Activated CD8-positive, alpha-beta T cell treated with anti-CD3 and anti-CD28 coated beads for 36 hours (primary cell): ENCODE measurements at regions of chrX and their contacts with region 1.

Region 1: DNA sequence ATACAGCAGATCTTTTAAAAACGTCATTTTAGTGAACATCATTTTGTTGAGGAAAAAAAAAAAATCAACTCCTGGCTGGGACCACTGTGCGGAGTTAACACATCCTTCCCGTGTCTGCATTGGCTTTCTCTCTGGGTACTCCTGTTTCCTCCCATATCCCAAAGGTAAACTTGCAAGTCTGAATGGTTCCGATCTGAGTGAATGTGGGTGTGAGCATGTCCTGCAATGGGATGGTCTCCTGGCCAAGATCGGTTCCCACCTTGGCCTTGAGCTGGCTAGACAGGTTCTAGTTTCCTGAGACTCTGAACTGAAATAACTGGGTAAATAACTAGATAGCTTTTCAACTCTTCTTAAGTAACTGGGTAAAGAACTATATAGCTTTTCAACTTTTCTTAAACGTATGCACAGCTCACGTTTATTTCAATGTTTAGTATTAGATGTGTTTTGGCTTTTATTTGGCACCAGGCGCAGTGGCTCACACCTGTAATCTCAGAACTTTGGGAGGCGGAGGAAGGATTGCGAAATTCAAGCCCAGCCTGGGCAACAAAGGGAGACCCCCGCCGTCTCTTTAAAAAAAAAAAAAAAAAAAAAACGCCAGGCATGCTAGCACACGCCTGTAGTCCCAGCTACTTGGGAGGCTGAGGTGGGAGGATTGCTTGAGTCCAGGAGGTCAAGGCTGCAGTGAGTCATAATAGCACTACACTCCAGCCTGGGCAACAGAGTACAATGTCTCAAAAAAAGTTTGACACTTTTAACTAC is 14.0 kb downstream of the RBMX start:
- DNase-seq: no peak
- ATAC-seq: no peak
- H3K4me3 Mint-ChIP-seq: no peak overlapping the region
- H3K27ac Mint-ChIP-seq: peak overlapping the region; percentile 76
- H3K4me1 Mint-ChIP-seq: peaks cover 45% of the 10 kb centered on the region
- H3K27me3 Mint-ChIP-seq: no peaks in the 10 kb centered on the region
- CTCF ChIP-seq: no peak

Region 2: DNA sequence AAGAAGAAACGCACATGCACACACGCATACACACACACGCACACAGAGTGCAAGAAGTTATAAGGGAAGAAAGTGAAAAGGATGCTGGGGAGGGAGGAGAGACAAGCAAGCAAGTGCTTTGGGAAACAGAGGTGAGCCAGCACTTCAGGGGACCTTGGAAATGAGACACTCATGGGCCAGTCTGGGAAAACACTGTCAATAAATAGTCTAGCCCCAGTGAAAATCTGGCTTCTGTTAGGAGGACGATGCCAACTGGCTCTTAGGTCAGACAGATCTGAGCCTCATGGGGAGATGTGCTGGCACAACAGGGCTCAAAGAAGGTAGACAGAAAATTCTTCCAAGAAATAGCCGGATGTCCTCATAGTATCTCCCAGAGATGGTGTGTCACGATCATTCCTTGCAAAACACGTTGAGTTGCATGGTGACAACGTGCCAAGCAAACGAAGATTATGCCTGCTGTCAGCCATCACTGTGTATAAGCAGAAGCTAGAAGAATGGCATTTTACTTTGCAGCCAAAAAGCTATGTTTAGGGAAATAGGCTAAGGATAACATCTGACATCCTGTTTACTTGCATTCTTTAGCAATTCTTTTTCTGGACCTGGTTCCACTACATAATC is 85.2 kb before region 1 on chrX:
- CTCF ChIA-PET with region 1: no interaction called
- POLR2A ChIA-PET with region 1: interaction called, 4 read pairs
- intact Hi-C with region 1: loop called (anchors 10 kb)
- DNase-seq: no peak
- ATAC-seq: no peak
- H3K4me3 Mint-ChIP-seq: peak overlapping the region; percentile 77
- H3K27ac Mint-ChIP-seq: peak overlapping the region; percentile 99
- H3K4me1 Mint-ChIP-seq: peaks cover 48% of the 10 kb centered on the region
- H3K27me3 Mint-ChIP-seq: no peaks in the 10 kb centered on the region
- CTCF ChIP-seq: no peak

Region 3: GRCh38 chrX:136816970-136817369 is 49.5 kb before region 1 on chrX:
- CTCF ChIA-PET with region 1: no interaction called
- POLR2A ChIA-PET with region 1: no interaction called
- intact Hi-C with region 1: no loop called
- DNase-seq: no peak
- ATAC-seq: no peak
- H3K4me3 Mint-ChIP-seq: no peak overlapping the region
- H3K27ac Mint-ChIP-seq: no peak overlapping the region
- H3K4me1 Mint-ChIP-seq: no peaks in the 10 kb centered on the region
- H3K27me3 Mint-ChIP-seq: no peaks in the 10 kb centered on the region
- CTCF ChIP-seq: no peak

Region 4: DNA sequence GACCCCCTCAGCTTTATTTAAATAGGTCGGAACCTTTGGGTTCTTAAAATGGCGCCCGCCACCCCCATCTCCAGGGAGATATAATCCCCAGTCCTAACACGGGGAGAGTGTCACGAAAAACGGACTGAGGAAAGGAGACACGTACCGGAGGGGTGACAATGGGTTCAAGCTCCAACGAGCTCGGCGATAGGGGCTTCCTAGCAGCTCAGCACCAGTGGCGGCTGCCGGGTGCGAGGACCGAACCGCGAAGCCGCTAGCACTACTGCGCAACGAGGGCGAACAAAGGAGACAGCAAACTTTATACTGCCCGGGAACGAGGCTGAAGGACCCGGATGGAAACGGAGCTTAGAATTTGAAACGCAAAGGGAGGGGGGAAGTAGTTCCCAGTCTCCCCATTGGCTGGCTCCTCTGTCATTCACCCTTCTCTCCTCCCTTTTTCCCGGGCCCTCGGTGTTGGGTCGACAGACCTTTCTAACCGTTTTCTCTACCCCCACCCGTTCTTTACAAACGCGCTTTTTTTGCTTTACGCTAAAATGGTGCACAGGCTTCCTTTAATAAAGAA is 14.0 kb after region 1 on chrX and contains the start of gene RBMX:
- CTCF ChIA-PET with region 1: interaction called, 3 read pairs
- POLR2A ChIA-PET with region 1: interaction called, 31 read pairs
- intact Hi-C with region 1: no loop called
- DNase-seq: peak; percentile 94
- ATAC-seq: peak; percentile 91
- H3K4me3 Mint-ChIP-seq: peak within 1 kb of the TSS; percentile 99
- H3K27ac Mint-ChIP-seq: peak within 1 kb of the TSS; percentile 100
- H3K4me1 Mint-ChIP-seq: peaks cover 21% of the 10 kb centered on the region
- H3K27me3 Mint-ChIP-seq: no peaks in the 10 kb centered on the region
- CTCF ChIP-seq: no peak
- total RNA-seq, gene RBMX: 285 TPM

Region 5: GRCh38 chrX:136920001-136920400 is 53.5 kb after region 1 on chrX:
- CTCF ChIA-PET with region 1: interaction called, 6 read pairs
- POLR2A ChIA-PET with region 1: no interaction called
- intact Hi-C with region 1: loop called (anchors 10 kb)
- DNase-seq: no peak
- ATAC-seq: no peak
- H3K4me3 Mint-ChIP-seq: no peak overlapping the region
- H3K27ac Mint-ChIP-seq: no peak overlapping the region
- H3K4me1 Mint-ChIP-seq: peaks cover under 1% of the 10 kb centered on the region
- H3K27me3 Mint-ChIP-seq: no peaks in the 10 kb centered on the region
- CTCF ChIP-seq: no peak